Activated CD4-positive, alpha-beta T cell treated with anti-CD3 and anti-CD28 coated beads, Interleukin-2, amount 10 ng/mL, durations not matched to agents 7 days and 5 days (primary cell): ENCODE measurements at regions of chr6 and their contacts with region 1.

Region 1: DNA sequence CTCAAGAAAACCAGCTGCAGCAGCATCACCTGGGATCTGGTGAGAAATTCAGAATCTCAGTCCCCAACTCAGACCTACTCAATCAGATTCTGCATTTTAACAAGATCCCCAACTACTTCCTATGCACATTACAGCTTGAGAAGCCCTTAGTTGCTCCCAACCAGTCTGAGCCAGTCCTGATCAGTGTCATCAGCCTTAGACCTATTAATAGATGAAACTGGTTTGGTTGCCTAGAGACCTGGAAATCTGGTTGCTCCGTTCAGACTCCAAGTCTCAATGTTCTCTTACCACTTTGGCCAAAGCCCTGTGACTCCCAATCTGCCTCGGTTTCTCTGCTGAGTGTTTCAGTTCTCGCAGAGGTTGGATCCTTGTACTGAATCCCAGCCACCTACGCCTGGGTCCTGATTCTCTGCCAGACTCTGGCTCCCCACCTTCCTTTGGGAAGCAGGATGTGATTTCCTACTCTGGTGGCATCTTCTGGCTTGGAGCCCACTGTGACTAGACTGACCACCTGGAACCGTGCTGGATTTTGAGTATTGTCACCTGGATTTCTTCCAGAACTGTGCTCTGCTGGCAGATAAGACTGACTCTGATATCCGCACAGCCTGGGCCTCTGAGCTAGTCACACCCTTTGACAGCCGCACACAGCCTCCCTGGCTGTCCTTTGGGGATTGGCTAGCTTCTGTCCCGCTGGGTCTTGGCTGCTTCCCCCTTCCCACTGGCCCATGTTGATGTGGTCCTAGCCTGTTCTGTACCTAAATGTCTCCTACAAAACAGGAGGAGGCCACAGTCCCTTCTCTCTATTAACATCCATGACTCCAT is 20.3 kb upstream of the ATXN1 start:
- DNase-seq: no peak
- H3K4me3 Mint-ChIP-seq: no peak overlapping the region
- H3K27ac Mint-ChIP-seq: no peak overlapping the region
- H3K4me1 Mint-ChIP-seq: no peaks in the 10 kb centered on the region
- H3K27me3 Mint-ChIP-seq: peaks cover 8% of the 10 kb centered on the region

Region 2: GRCh38 chr6:16770701-16771569 is 10.6 kb before region 1 on chr6:
- CTCF ChIA-PET with region 1: interaction called, 15 read pairs
- POLR2A ChIA-PET with region 1: no interaction called
- DNase-seq: peak; percentile 73
- H3K4me3 Mint-ChIP-seq: no peak overlapping the region
- H3K27ac Mint-ChIP-seq: no peak overlapping the region
- H3K4me1 Mint-ChIP-seq: peaks cover 53% of the 10 kb centered on the region
- H3K27me3 Mint-ChIP-seq: no peaks in the 10 kb centered on the region